ENCODE measurements at regions of chr9 and their contacts with region 1.

Region 1: GRCh38 chr9:19925817-19926503 is 137.1 kb upstream of the SLC24A2 start:
- DNase-seq: peak; percentile 74 to 93
- H3K4me3 ChIP-seq: peak overlapping the region; percentile 31 to 36 (median 34)
- H3K27ac ChIP-seq: no peak overlapping the region
- H3K4me1 ChIP-seq: peaks cover 0 to 12% (median 5%) of the 10 kb centered on the region in 4 donors
- H3K27me3 ChIP-seq: no peaks in the 10 kb centered on the region
- CTCF ChIP-seq: peak in 5 of 7 experiments; percentile 93 to 95 (median 94)
- EP300 ChIP-seq: no peak
- POLR2A ChIP-seq: no peak

Region 2: DNA sequence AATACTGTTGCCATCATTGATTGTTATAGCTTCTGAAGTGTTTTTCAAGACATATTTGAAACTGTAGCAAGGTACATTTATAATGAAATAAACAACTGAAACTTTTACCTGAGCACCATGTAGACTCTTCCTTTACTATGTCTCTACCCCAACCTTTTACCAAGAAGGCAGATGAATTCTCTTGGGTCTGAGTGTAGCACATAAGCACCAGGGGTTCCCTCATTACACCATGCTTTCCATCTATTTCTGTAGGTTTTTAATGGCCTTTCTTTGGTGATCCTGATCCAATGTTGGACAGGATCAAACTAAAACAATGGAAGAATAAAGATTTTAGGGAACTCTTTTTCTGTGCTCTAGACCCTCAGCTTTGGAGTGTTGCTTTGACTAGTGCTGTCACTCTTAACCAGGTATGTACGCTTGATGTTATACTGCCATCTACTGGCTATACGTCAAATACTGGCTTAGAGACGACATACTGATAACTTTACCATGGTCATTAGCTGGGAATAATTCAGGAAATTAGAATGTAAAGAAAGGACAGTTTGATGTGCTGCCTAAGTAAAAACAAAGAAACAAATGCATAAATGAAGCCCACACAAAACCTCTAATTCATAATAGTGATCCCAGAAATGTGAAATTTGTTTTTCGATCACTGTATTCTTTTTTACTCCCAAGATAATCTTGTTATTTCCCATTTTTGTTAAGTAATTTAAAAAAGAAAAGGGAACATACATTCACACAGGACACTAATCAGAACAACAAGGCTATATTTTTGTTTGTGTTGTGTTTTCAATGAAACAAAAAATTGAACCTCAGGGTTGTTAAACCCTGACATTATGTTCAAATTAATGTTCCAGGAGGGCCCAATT is 1185.0 kb after region 1 on chr9:
- intact Hi-C with region 1: loop called (anchors 10 kb)
- DNase-seq: peak in 1 of 2 donors; percentile 88
- H3K4me3 ChIP-seq: no peak overlapping the region
- H3K27ac ChIP-seq: no peak overlapping the region
- H3K4me1 ChIP-seq: peaks cover 0 to 4% (median 0%) of the 10 kb centered on the region in 4 donors
- H3K27me3 ChIP-seq: no peaks in the 10 kb centered on the region
- CTCF ChIP-seq: peak in 5 of 7 experiments; percentile 51 to 76 (median 70)
- EP300 ChIP-seq: no peak
- POLR2A ChIP-seq: no peak

Measured in stomach (tissue), 19 donors.